Calu3 (cell line): ENCODE measurements at regions of chr2 and their contacts with region 1.

Region 1: DNA sequence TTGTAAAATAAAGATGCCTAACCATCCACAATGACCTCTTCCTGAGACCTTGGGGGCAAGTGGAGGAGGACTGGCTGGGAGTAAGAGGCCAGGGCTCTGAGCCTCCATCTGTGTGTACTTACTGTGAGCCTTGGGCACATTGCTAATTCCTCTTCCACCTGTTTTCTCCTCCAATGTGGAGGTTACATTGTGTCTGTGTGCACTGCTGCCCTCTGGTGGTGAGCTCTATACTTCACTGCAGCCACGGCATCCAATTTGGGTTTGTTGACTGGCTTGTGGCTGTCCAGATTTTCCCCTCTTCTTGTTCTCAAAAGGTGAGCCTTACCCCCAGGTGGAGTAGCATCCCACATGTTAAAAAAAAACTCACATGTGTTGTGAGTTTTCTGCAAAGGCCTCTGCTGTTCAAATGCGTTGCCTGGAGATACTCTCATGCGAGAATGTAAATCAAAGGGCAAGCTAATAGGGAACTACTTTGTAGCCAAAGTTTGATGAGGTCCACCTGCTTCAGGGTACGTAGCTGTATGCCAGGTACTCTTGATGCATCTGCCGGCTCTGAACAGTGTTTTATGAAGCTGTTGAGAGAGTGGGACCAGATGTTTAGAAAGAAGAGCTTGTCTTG is 80.8 kb downstream of the APOB start:
- DNase-seq: peak; percentile 76
- H3K4me3 Mint-ChIP-seq: no peak overlapping the region
- H3K27ac Mint-ChIP-seq: no peak overlapping the region
- H3K4me1 Mint-ChIP-seq: no peaks in the 10 kb centered on the region
- H3K27me3 Mint-ChIP-seq: peaks cover 85% of the 10 kb centered on the region
- CTCF ChIP-seq: peak; percentile 77

Region 2: GRCh38 chr2:20682167-20682920 is 280.7 kb before region 1 on chr2:
- CTCF ChIA-PET with region 1: interaction called, 4 read pairs
- intact Hi-C with region 1: loop called (anchors 1 kb)
- DNase-seq: no peak
- H3K4me3 Mint-ChIP-seq: no peak overlapping the region
- H3K27ac Mint-ChIP-seq: no peak overlapping the region
- H3K4me1 Mint-ChIP-seq: no peaks in the 10 kb centered on the region
- H3K27me3 Mint-ChIP-seq: no peaks in the 10 kb centered on the region
- CTCF ChIP-seq: peak; percentile 34

Region 3: GRCh38 chr2:20723543-20723942 is 239.5 kb before region 1 on chr2:
- CTCF ChIA-PET with region 1: no interaction called
- intact Hi-C with region 1: loop called (anchors 2 kb)
- DNase-seq: no peak
- H3K4me3 Mint-ChIP-seq: no peak overlapping the region
- H3K27ac Mint-ChIP-seq: no peak overlapping the region
- H3K4me1 Mint-ChIP-seq: peaks cover 6% of the 10 kb centered on the region
- H3K27me3 Mint-ChIP-seq: no peaks in the 10 kb centered on the region
- CTCF ChIP-seq: no peak

Region 4: GRCh38 chr2:20781656-20782265 is 181.3 kb before region 1 on chr2:
- CTCF ChIA-PET with region 1: interaction called, 24 read pairs
- intact Hi-C with region 1: loop called (anchors 1 kb)
- DNase-seq: peak; percentile 38
- H3K4me3 Mint-ChIP-seq: no peak overlapping the region
- H3K27ac Mint-ChIP-seq: no peak overlapping the region
- H3K4me1 Mint-ChIP-seq: no peaks in the 10 kb centered on the region
- H3K27me3 Mint-ChIP-seq: no peaks in the 10 kb centered on the region
- CTCF ChIP-seq: peak; percentile 71

Region 5: GRCh38 chr2:21571686-21572085 is 608.6 kb after region 1 on chr2:
- CTCF ChIA-PET with region 1: no interaction called
- intact Hi-C with region 1: no loop called
- DNase-seq: no peak
- H3K4me3 Mint-ChIP-seq: no peak overlapping the region
- H3K27ac Mint-ChIP-seq: no peak overlapping the region
- H3K4me1 Mint-ChIP-seq: no peaks in the 10 kb centered on the region
- H3K27me3 Mint-ChIP-seq: no peaks in the 10 kb centered on the region
- CTCF ChIP-seq: no peak